Activated B cell treated with CpG ODN at 0.5 μM for 24 hours (primary cell): ENCODE measurements at regions of chr15 and their contacts with region 1.

Region 1: DNA sequence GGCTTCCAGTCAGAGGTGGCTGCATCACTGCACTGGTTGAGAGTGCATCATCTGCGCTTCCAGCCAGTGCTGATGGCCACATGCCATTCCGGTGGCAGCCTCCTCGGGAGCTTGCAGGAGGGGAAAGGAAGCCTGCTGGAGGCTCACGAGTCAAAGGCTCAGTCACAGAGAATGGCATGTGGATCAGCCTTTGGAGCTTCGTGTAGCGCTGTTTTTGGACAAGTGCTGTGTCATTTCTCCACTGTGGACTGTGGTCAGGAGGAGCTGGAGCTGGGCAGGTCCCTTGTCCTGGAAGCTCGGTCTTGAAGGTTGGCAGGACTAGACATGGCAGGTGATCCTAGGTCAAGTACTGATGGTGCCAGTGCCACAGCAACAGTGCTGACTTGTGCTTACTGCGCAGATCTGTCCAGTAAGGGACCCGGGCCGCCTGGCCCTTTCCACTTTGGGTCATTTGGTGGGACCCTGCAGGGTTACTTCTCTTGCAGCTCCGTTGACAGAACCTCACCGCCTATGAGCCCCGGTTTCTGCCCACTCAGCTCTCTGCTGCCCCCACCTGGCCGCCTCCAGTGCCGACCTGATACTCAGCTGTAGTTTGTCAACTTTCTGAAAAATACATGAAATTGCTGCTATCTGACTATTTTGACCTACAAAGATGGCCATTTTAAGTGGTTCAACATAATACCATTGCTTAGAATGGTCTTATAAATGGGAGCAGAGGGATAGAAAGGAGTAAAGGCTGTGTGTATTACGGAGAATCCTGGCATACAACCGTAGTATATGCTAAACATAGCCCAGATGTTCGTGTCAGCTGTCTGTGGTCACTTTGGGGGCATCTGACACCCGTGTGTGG is 27.6 kb upstream of the TRPM1 start:
- DNase-seq: peak; percentile 83
- ATAC-seq: peak; percentile 96
- H3K4me3 Mint-ChIP-seq: no peak overlapping the region
- H3K27ac Mint-ChIP-seq: no peak overlapping the region
- H3K4me1 Mint-ChIP-seq: peaks cover 10% of the 10 kb centered on the region
- H3K27me3 Mint-ChIP-seq: no peaks in the 10 kb centered on the region
- CTCF ChIP-seq: peak; percentile 89

Region 2: DNA sequence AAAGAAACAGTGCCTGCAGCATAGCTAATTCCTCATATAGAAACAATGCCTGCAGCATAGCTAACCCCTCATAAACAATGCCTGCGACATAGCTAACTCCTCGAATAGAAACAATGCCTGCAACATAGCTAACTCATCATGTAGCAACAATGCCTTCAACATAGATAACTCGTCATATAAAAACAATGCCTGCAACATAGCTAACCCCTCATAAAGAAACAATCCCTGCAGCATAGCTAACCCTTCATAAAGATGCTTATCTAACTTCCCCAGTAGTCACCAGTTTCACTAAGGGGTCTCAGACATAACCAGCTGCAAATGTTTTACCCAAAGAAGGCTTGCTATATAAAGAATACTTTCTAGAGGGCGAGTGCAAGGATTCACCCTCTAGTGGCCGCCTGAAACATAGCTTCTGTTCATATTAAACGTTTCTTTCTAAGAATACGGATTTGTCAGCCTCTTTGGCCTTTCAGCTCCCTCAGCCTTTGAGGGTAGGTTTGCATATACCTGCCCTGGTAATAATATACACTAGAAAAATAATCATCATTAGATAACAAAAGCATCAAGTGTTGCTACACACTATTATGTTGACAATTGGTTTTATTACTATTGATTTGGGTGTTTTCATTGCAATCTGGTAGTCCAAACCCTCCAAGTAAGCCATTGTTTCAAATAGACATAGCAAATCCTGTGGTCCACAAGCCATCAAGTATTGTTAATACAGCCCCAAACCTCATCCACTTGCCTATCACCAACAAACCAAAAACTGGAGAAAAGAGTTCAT is 269.9 kb before region 1 on chr15:
- CTCF ChIA-PET with region 1: interaction called, 10 read pairs
- POLR2A ChIA-PET with region 1: no interaction called
- intact Hi-C with region 1: loop called (anchors 2 kb)
- DNase-seq: no peak
- ATAC-seq: peak; percentile 47
- H3K4me3 Mint-ChIP-seq: no peak overlapping the region
- H3K27ac Mint-ChIP-seq: no peak overlapping the region
- H3K4me1 Mint-ChIP-seq: no peaks in the 10 kb centered on the region
- H3K27me3 Mint-ChIP-seq: no peaks in the 10 kb centered on the region
- CTCF ChIP-seq: peak; percentile 70

Region 3: DNA sequence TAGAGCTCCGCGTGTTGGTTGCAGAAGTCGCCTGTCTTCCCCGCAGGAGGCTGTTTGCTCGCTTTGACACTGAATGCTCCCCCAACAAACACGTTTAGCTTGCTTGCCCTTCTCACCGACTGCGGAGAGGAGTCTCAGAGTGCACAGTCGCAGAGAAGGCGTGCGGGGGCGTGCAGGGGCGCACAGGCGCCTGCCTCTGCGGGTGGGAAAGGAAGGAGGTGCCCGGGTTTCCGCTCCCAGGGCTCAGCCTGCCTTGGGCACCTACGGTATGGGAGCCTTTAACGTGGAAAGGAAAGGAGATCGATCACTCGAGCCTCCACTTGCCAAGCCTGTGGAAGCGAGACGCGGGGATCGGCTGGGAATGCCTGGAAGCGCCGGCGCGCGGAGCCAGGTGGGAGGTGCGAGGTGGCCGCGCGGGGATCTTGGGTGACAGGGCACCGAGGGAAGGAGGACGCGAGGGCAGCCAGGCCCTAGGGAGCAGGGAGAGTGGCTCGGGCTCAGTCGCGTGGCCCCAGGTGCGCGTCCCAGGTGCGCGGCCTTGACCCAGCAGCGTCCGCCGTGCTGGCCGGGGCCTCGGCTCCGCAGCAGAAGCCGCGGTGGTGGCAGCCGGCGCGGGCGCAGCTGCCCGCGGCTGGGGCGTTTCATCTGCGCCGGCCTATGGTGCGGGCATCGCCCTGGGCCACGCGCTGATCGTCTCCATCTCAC is 225.5 kb before region 1 on chr15 and contains the start of gene FAN1:
- CTCF ChIA-PET with region 1: interaction called, 15 read pairs
- POLR2A ChIA-PET with region 1: interaction called, 7 read pairs
- intact Hi-C with region 1: loop called (anchors 2 kb)
- DNase-seq: peak; percentile 69
- ATAC-seq: peak; percentile 86
- H3K4me3 Mint-ChIP-seq: peak within 1 kb of the TSS; percentile 98
- H3K27ac Mint-ChIP-seq: peak within 1 kb of the TSS; percentile 82
- H3K4me1 Mint-ChIP-seq: peaks cover 31% of the 10 kb centered on the region
- H3K27me3 Mint-ChIP-seq: no peaks in the 10 kb centered on the region
- CTCF ChIP-seq: no peak
- total RNA-seq, gene FAN1: 16.2 and 20.8 TPM in 2 replicates

Region 4: DNA sequence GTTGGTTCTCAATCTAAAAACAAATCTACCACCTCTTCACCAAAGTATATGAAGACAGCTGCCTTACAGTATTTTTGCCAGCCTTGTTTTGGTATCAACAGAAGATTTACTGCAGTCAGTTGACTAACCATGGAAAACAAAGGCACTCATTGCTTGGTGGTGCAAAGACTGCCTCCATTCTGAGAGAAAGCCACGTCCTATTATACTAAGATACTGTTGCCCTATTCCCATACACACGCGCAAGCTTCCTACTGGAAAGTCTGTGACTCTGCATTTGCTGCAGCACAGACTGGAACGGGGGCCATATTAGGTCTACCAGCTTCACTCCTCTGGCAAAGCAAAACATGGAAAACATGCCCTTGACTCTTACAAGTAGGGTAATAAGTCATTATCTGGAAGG is 155.8 kb before region 1 on chr15:
- CTCF ChIA-PET with region 1: interaction called, 35 read pairs
- POLR2A ChIA-PET with region 1: no interaction called
- intact Hi-C with region 1: loop called (anchors 1 kb)
- DNase-seq: no peak
- ATAC-seq: no peak
- H3K4me3 Mint-ChIP-seq: no peak overlapping the region
- H3K27ac Mint-ChIP-seq: no peak overlapping the region
- H3K4me1 Mint-ChIP-seq: peaks cover 67% of the 10 kb centered on the region
- H3K27me3 Mint-ChIP-seq: no peaks in the 10 kb centered on the region
- CTCF ChIP-seq: no peak

Region 5: GRCh38 chr15:30991255-30992072 is 137.7 kb before region 1 on chr15 and contains the start of gene MTMR10:
- CTCF ChIA-PET with region 1: interaction called, 12 read pairs
- POLR2A ChIA-PET with region 1: interaction called, 7 read pairs
- intact Hi-C with region 1: loop called (anchors 1 kb)
- DNase-seq: peak; percentile 89
- ATAC-seq: peak; percentile 92
- H3K4me3 Mint-ChIP-seq: peak within 1 kb of the TSS; percentile 94
- H3K27ac Mint-ChIP-seq: peak within 1 kb of the TSS; percentile 94
- H3K4me1 Mint-ChIP-seq: peaks cover 34% of the 10 kb centered on the region
- H3K27me3 Mint-ChIP-seq: no peaks in the 10 kb centered on the region
- CTCF ChIP-seq: no peak
- total RNA-seq, gene MTMR10: 39.3 and 42.5 TPM in 2 replicates

Region 6: DNA sequence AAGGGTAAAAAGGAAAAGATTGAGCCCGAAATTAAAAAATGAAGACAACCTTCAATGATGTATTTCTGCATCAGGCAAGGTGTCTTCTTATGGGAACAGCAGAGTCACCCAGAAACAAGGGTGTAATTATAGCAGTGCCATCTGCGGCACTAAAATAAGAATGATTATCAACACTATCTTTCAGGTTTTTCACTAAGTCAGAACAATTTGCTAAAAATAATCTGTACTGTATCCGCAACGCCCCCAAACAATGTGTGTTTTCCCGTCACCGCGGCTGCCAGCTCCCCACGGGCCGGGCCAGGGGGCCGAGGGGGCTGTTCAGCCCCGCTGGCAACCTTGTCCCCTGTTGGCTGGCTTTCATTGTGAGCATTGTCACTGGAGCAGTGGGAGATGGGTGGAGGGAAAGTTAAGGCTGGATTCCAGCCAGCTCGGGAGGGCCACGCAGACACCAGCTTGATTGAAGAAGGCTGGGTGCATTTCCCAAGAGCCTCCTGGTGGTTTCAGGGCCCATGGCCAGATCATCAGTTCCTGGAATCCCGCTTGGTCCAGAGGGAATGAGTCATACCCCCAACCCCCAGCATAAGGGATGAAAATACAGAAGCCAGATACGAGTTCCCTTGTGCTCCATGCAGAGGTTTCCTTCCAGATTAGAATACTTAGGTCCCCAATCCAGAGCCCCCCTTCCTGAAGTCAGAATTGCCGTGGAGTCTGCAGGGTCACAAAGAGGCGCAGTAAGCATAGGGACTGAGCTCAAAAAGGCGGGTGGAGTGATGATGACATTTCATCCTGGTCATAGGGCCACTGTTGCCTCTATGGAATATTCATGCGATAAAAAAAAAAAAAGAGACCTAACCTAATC is 107.3 kb after region 1 on chr15:
- CTCF ChIA-PET with region 1: no interaction called
- POLR2A ChIA-PET with region 1: no interaction called
- intact Hi-C with region 1: no loop called
- DNase-seq: no peak
- ATAC-seq: peak; percentile 13
- H3K4me3 Mint-ChIP-seq: no peak overlapping the region
- H3K27ac Mint-ChIP-seq: peak overlapping the region; percentile 59
- H3K4me1 Mint-ChIP-seq: peaks cover 70% of the 10 kb centered on the region
- H3K27me3 Mint-ChIP-seq: no peaks in the 10 kb centered on the region
- CTCF ChIP-seq: no peak

Region 7: GRCh38 chr15:31488426-31489204 is 359.5 kb after region 1 on chr15:
- CTCF ChIA-PET with region 1: interaction called, 12 read pairs
- POLR2A ChIA-PET with region 1: no interaction called
- intact Hi-C with region 1: loop called (anchors 1 kb)
- DNase-seq: no peak
- ATAC-seq: peak; percentile 69
- H3K4me3 Mint-ChIP-seq: no peak overlapping the region
- H3K27ac Mint-ChIP-seq: no peak overlapping the region
- H3K4me1 Mint-ChIP-seq: peaks cover 22% of the 10 kb centered on the region
- H3K27me3 Mint-ChIP-seq: peaks cover 8% of the 10 kb centered on the region
- CTCF ChIP-seq: peak; percentile 24